ENCODE measurements at regions of chr9 and their contacts with region 1.

Region 1: DNA sequence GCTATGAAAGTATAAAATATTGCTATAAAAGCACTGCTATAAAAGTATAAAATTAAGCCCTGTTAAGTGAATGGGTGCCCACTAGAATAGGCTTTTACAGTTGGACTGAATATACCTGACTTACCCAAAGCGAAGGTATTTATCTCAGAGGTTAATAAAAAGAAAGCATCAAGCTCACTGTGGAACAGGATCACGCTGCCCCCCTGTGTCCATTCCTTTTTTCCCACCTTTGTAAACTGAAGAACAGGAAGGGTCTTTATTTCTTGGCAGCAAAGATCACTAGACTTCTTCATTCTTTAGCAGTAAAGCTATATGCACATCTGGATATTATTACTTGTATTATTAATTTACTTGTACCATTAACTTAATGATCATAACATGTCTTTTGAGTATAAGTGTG is 22.1 kb upstream of the PLPP6 start:
- DNase-seq: no peak
- ATAC-seq: 0 out of 3 replicates have a peak, but pooled peaks have one; percentile 29
- H3K4me3 ChIP-seq: no peak overlapping the region
- H3K27ac ChIP-seq: no peak overlapping the region
- H3K4me1 ChIP-seq: no peaks in the 10 kb centered on the region
- H3K27me3 ChIP-seq: no peaks in the 10 kb centered on the region
- CTCF ChIP-seq: peak; percentile 21 to 42 (median 31); a peak in 3 of 6 replicates
- EP300 ChIP-seq: no peak
- POLR2A ChIP-seq: no peak
- RAD21 ChIP-seq: peak; percentile 60

Region 2: GRCh38 chr9:4277531-4277991 is 362.5 kb before region 1 on chr9:
- CTCF ChIA-PET with region 1: no interaction called
- POLR2A ChIA-PET with region 1: no interaction called
- RAD21 ChIA-PET with region 1: no interaction called
- SMC1A ChIA-PET with region 1: no interaction called
- in situ Hi-C with region 1: no loop called
- intact Hi-C with region 1: no loop called
- DNase-seq: no peak
- ATAC-seq: no peak
- H3K4me3 ChIP-seq: no peak overlapping the region
- H3K27ac ChIP-seq: no peak overlapping the region
- H3K4me1 ChIP-seq: no peaks in the 10 kb centered on the region
- H3K27me3 ChIP-seq: no peaks in the 10 kb centered on the region
- CTCF ChIP-seq: no peak
- EP300 ChIP-seq: no peak
- POLR2A ChIP-seq: no peak
- RAD21 ChIP-seq: no peak

Region 3: DNA sequence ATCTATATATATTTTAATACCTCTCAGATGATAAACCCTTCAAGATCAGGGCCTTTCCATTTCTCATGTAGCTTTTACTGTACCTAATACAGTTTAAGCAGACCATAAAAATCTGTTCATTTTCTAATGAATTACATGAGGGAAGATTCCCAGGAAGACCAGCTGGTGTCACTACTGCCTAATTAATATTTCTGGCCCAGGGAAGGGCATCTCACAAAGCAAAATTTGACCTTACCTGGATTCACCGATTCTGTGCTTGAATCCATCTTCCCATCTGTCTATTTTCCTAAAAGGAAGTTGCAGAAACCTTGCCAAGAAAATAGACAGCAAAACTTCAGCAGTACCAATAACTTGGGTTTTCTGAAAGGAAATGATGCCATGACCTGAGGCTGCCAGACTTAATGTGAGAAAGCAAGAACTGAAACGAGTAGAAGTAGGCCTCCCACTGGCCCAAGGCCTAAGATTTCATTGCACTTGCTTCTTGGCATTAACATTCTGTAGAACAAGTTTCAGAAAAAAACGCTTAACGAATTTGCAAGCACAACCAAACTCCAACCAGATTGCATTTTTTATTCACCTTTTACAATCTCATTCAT is 257.2 kb before region 1 on chr9:
- CTCF ChIA-PET with region 1: interaction called, 9 read pairs
- POLR2A ChIA-PET with region 1: no interaction called
- RAD21 ChIA-PET with region 1: interaction called, 4 read pairs
- SMC1A ChIA-PET with region 1: interaction called, 10 read pairs
- in situ Hi-C with region 1: no loop called
- intact Hi-C with region 1: loop called (anchors 2 kb)
- DNase-seq: peak; percentile 40
- ATAC-seq: peak; percentile 87
- H3K4me3 ChIP-seq: no peak overlapping the region
- H3K27ac ChIP-seq: no peak overlapping the region
- H3K4me1 ChIP-seq: peaks cover 5% of the 10 kb centered on the region; the same call in 1 of the 2 replicates
- H3K27me3 ChIP-seq: no peaks in the 10 kb centered on the region
- CTCF ChIP-seq: peak; percentile 51 to 73 (median 58); a peak in 5 of 6 replicates
- EP300 ChIP-seq: no peak
- POLR2A ChIP-seq: no peak
- RAD21 ChIP-seq: peak; percentile 87

Region 4: DNA sequence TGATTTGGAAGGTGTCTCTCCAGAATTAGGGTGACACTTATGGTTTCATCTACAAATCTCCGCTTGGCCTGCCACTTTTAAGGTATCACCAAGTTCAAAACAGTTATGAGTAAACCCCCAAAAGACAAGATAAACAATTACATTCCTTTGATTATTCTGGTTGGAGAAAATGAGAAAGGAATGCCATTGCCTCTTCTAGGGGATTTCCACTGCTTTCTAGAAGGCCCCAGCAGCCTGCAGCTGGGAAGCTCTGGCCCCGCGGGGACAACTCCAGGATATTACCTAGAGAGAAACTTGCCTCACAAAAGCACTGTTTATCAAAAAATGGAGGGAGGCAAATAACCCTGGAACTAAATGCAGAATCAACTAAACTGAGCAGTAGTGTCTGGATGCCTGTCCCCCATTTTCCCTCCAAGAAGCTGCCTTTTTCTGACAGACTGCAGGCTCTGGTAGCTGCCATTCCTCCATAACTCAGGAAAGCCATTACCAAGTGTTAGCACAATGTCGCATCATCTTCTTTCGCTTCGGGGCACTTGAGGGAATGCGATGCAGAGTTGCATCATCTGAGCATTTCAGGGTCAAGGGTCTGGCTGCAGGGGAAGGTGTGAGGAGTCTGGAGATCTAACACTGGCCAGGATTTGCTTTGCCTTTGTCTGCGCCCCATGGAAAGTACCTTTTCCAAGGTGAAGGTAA is 49.5 kb before region 1 on chr9:
- CTCF ChIA-PET with region 1: no interaction called
- POLR2A ChIA-PET with region 1: no interaction called
- RAD21 ChIA-PET with region 1: no interaction called
- SMC1A ChIA-PET with region 1: no interaction called
- in situ Hi-C with region 1: no loop called
- intact Hi-C with region 1: no loop called
- DNase-seq: no peak
- ATAC-seq: no peak
- H3K4me3 ChIP-seq: no peak overlapping the region
- H3K27ac ChIP-seq: no peak overlapping the region
- H3K4me1 ChIP-seq: no peaks in the 10 kb centered on the region
- H3K27me3 ChIP-seq: no peaks in the 10 kb centered on the region
- CTCF ChIP-seq: no peak
- EP300 ChIP-seq: no peak
- POLR2A ChIP-seq: no peak
- RAD21 ChIP-seq: no peak

Measured in GM12878 (cell line).